Endothelial cell of umbilical vein (primary cell): ENCODE measurements at regions of chr4 and their contacts with region 1.

Region 1: DNA sequence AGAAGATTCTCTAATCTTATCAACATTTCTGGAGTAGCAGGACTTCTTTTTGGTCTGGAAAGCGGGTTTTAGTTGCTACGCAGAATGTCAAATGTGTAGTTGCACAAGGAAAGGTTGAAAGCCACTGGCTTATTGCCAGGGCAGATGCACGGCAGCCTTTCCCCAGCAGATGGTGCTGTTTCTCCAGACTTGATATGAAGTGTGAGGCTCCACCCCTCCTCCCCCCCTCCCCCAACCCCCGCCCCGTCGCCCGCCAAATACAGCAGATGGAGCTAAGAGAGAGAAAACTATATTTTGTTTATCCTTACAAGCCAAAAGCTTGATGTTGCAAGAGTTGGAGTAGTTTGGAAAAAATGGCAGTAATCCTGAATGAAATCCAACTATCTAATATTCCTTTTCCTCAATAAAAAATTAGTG is 32.0 kb downstream of the ENOPH1 start:
- DNase-seq: peak; percentile 86
- H3K4me3 ChIP-seq: no peak overlapping the region
- H3K27ac ChIP-seq: no peak overlapping the region
- H3K4me1 ChIP-seq: no peaks in the 10 kb centered on the region
- H3K27me3 ChIP-seq: no peaks in the 10 kb centered on the region
- CTCF ChIP-seq: peak; percentile 62 to 80
- POLR2A ChIP-seq: no peak

Region 2: DNA sequence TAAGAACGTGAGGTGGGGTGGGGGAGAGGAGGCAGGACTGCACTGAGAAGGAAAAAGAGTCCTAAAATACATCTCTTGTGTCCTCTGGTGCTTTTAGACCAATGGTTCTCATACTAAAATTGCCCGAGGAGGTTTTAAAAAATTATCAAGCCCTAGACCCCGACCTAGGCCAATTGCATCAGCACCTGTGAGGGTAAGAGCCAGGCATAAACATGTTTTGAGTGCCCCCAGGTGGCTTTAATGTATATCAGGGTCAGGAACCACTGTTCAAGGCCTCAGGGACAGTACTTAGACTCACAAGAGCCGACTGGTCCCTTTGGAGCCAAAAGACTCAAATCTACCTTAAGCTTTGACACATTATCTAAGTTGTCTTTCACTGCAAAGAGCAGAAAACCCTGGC is 136.9 kb after region 1 on chr4:
- CTCF ChIA-PET with region 1: interaction called, 10 read pairs
- POLR2A ChIA-PET with region 1: no interaction called
- dilution Hi-C with region 1: no loop called
- intact Hi-C with region 1: loop called (anchors 2 kb)
- DNase-seq: no peak
- H3K4me3 ChIP-seq: no peak overlapping the region
- H3K27ac ChIP-seq: no peak overlapping the region
- H3K4me1 ChIP-seq: no peaks in the 10 kb centered on the region
- H3K27me3 ChIP-seq: peaks cover 5 to 7% of the 10 kb centered on the region in 2 experiments
- CTCF ChIP-seq: no peak
- POLR2A ChIP-seq: no peak

Region 3: DNA sequence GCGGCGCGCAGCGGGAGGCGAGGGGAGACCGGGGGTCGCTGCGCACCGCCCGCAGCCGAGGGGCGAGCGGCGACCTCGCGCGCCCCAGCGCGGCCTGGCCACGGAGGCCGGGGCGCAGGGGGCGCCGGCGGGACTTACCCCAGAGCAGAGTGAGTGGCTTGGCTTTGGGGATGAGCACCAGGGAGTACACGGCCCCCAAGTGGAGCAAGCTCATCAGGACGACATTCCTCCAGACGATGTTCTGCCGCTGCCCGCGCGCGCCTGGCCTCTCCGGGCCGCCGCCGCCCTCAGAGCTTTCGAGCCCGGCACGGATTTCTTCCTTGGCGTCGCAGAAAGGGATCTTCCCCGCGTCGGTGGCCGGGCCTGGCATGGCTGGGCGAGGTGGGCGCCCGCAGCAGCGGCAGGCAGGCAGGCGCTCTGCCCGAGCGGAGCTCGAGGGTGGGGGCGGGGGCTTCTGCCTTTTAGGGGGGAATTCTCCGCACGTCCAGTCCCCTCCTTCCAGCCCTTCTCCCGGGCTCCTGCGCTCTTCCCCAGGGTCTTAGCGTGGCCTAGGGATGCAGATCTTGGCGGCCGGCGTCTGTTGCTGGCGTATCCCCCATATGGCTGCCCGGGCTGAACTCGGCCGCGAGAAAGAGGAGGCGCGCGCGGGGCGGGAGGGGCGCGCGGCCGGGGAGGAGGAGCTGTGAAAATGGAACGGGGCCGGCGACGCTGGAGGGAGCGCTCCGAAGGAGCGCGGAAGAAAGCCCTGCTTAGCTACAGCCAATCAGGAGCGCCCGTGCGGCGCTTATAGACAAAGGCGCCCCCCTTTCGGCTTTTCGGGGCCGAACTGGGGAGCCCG is 336.0 kb after region 1 on chr4 and contains the start of gene SCD5:
- CTCF ChIA-PET with region 1: interaction called, 20 read pairs
- POLR2A ChIA-PET with region 1: interaction called, 6 read pairs
- dilution Hi-C with region 1: no loop called
- intact Hi-C with region 1: loop called (anchors 1 kb)
- DNase-seq: peak; percentile 76
- H3K4me3 ChIP-seq: peak within 1 kb of the TSS; percentile 79 to 91 (median 82)
- H3K27ac ChIP-seq: peak within 1 kb of the TSS; percentile 8
- H3K4me1 ChIP-seq: peaks cover 18% of the 10 kb centered on the region
- H3K27me3 ChIP-seq: peaks cover 0 to 3% of the 10 kb centered on the region in 2 experiments
- CTCF ChIP-seq: no peak
- POLR2A ChIP-seq: no peak
- total RNA-seq, gene SCD5: 35.8 and 38.4 TPM in 2 replicates

Region 4: DNA sequence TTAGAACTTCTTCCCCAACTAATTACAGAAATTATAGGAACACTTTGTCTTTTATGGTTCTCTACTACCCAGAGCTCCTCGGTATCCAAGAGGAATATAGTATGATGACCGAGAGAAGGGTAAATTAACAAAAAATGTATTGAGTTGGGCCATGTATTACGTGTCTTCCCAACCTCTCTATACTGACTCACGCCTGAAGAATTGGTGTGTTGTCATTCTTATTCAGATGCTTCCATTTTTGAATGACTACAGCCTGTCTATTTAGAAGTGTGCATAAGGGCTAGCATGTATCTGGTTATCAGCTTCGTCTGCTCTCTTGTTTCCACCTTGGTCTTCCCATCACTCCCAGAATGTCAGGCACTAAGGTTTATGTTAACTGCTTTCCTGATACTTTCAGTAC is 360.6 kb after region 1 on chr4:
- CTCF ChIA-PET with region 1: interaction called, 20 read pairs
- POLR2A ChIA-PET with region 1: no interaction called
- dilution Hi-C with region 1: no loop called
- intact Hi-C with region 1: loop called (anchors 5 kb)
- DNase-seq: no peak
- H3K4me3 ChIP-seq: no peak overlapping the region
- H3K27ac ChIP-seq: no peak overlapping the region
- H3K4me1 ChIP-seq: peaks cover 11% of the 10 kb centered on the region
- H3K27me3 ChIP-seq: no peaks in the 10 kb centered on the region
- CTCF ChIP-seq: no peak
- POLR2A ChIP-seq: no peak

Region 5: GRCh38 chr4:82851885-82852750 is 389.7 kb after region 1 on chr4:
- CTCF ChIA-PET with region 1: interaction called, 17 read pairs
- POLR2A ChIA-PET with region 1: no interaction called
- dilution Hi-C with region 1: no loop called
- intact Hi-C with region 1: no loop called
- DNase-seq: peak; percentile 61
- H3K4me3 ChIP-seq: no peak overlapping the region
- H3K27ac ChIP-seq: no peak overlapping the region
- H3K4me1 ChIP-seq: no peaks in the 10 kb centered on the region
- H3K27me3 ChIP-seq: no peaks in the 10 kb centered on the region
- CTCF ChIP-seq: peak in 1 of 2 donors; percentile 52
- POLR2A ChIP-seq: no peak